Stomach (tissue), 19 donors: ENCODE measurements at regions of chr14 and their contacts with region 1.

Region 1: DNA sequence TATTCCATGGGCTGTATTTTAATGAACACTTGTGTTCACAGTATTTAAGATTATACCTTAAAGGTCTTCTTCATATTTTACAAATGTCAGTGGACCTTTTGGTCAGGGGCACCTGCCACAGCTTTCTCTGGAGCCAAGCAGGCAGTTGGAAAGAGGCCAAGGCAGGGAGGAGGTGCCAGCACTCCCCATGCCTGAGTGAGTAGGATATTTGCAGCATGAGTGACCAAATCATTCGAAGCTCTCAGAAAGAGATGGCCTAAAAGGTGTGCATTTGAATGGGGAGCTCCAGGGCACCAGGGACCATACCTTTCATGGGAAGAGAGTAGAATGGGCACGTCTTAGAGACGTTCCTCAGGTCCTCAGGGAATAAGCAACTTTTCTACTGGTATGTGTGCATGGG is 121.6 kb downstream of the GPR135 start:
- DNase-seq: peak in 1 of 2 donors; percentile 39
- H3K4me3 ChIP-seq: no peak overlapping the region
- H3K27ac ChIP-seq: peak overlapping the region in 3 of 5 donors; percentile 50 to 79 (median 66)
- H3K4me1 ChIP-seq: peaks cover 0 to 33% (median 15%) of the 10 kb centered on the region in 4 donors
- H3K27me3 ChIP-seq: no peaks in the 10 kb centered on the region
- CTCF ChIP-seq: no peak
- EP300 ChIP-seq: no peak
- POLR2A ChIP-seq: no peak

Region 2: DNA sequence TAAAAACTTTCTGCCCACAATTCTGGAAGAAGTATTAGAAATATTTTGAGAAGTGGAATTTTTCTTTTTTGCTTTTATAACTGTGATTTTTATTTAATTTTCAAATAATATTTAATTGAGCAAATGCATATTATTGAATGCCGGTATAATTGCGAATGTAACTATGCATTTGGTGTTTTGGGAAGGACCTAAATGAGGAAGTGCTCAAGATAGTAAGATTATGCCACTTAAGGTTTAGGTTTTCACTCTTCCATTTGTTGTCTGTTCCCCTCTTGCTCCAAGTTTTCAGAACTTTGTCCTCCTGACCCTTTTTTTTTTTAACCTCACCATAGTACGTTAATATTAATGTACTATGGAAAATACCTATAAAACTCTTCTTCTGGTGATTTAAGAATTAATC is 830.3 kb before region 1 on chr14:
- intact Hi-C with region 1: loop called (anchors 10 kb)
- DNase-seq: no peak
- H3K4me3 ChIP-seq: no peak overlapping the region
- H3K27ac ChIP-seq: no peak overlapping the region
- H3K4me1 ChIP-seq: peaks cover 0 to 4% (median 0%) of the 10 kb centered on the region in 4 donors
- H3K27me3 ChIP-seq: no peaks in the 10 kb centered on the region
- CTCF ChIP-seq: no peak
- EP300 ChIP-seq: no peak
- POLR2A ChIP-seq: no peak